Activated CD4-positive, alpha-beta memory T cell treated with anti-CD3 and anti-CD28 coated beads for 36 hours (primary cell): ENCODE measurements at regions of chr16 and their contacts with region 1.

Region 1: DNA sequence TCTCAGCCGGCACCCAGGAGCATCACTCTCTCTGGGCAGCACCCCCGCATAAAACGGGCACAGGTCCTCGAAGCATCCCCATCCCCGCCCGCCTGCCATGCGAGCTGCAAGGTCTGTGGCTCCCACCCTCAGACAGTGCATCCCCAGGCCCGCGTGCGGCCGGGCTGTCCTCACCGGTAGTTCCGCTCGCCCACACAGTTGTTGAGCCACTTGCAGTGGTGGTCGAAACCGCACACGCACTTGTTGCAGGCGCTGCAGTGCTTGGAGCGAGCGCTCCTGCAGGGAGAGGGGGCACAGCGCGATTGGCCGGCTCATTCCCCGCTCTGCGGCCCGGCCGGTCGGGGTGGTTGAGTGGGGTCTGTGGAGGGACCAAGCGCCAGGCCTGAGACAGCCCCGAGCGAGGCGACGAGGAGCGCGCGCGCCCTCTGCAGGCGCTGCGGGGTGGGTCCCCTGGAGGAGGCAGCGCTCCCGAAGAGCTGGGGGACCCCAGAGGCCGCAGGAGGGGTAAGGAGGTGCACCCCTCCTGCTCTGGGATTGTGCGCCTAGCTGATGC is 6.0 kb upstream of the TPPP3 start:
- DNase-seq: peak; percentile 65
- H3K4me3 Mint-ChIP-seq: no peak overlapping the region
- H3K27ac Mint-ChIP-seq: no peak overlapping the region
- H3K4me1 Mint-ChIP-seq: peaks cover 1% of the 10 kb centered on the region
- H3K27me3 Mint-ChIP-seq: peaks cover 14% of the 10 kb centered on the region

Region 2: DNA sequence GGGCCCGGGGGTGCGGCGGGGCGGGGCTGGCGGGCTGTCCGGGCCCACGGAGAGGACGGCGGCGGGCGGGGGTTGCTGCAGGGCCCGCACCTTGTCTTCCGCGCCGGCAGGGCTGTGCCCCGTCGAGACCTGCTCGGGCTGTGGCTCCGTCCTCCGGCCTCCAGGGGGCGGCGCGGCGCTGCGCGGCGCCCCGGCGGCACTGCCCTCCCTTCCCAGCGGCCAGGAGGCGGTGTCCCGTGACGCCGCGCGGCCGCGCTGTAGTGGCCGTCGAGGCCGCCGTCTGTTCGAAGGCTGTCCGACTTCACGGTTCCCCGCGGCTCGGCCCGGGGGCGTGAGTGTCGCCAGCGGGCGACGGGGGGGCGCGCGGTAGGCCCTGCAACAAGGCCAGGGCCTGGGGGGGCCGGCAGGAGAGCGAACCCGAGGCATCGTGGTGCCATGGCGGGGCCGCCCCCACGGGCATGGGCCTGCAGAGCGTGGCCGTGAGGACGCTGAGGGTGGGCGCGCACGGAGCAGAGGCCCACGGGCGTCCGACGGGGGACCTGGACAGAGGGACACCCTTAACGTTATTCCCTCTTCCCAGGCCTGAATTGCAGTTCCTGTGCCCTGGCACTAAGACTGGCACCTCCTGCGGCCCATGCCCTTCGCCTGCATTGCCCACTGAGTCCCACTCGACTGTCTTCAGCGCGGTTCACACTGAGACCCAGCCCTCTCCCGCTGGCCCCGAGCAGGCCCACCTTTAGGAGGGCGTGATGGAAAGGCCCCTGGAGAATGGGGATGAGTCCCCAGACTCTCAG is 119.8 kb before region 1 on chr16 and contains the start of gene PLEKHG4:
- CTCF ChIA-PET with region 1: interaction called, 15 read pairs
- POLR2A ChIA-PET with region 1: no interaction called
- intact Hi-C with region 1: loop called (anchors 2 kb)
- DNase-seq: peak; percentile 90
- H3K4me3 Mint-ChIP-seq: peak within 1 kb of the TSS; percentile 86
- H3K27ac Mint-ChIP-seq: peak within 1 kb of the TSS; percentile 88
- H3K4me1 Mint-ChIP-seq: peaks cover 20% of the 10 kb centered on the region
- H3K27me3 Mint-ChIP-seq: no peaks in the 10 kb centered on the region
- total RNA-seq, gene PLEKHG4: 22.7 to 24.6 TPM

Region 3: DNA sequence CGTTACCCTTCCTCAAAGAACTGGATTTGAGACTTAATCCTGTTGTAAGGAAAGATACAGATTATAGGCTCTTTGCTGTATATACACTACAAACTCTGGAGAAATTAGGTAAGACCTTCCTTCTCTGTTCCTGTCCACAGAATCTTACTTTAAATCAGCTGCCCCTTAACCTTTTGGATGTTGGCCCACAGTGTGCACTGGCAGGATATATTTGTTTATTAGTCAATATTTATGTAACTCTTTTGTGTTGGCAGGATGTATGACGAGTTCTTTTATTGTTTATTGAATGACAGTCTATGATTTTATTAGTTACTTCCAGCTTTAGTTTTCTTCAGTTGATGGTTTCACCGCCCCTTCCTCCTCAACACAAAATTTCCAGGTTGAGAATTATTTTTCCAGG is 52.9 kb before region 1 on chr16:
- CTCF ChIA-PET with region 1: interaction called, 11 read pairs
- POLR2A ChIA-PET with region 1: no interaction called
- intact Hi-C with region 1: no loop called
- DNase-seq: no peak
- H3K4me3 Mint-ChIP-seq: no peak overlapping the region
- H3K27ac Mint-ChIP-seq: no peak overlapping the region
- H3K4me1 Mint-ChIP-seq: no peaks in the 10 kb centered on the region
- H3K27me3 Mint-ChIP-seq: peaks cover 4% of the 10 kb centered on the region

Region 4: GRCh38 chr16:67372664-67373063 is 26.6 kb before region 1 on chr16:
- CTCF ChIA-PET with region 1: interaction called, 3 read pairs
- POLR2A ChIA-PET with region 1: no interaction called
- intact Hi-C with region 1: loop called (anchors 2 kb)
- DNase-seq: no peak
- H3K4me3 Mint-ChIP-seq: no peak overlapping the region
- H3K27ac Mint-ChIP-seq: no peak overlapping the region
- H3K4me1 Mint-ChIP-seq: no peaks in the 10 kb centered on the region
- H3K27me3 Mint-ChIP-seq: peaks cover 8% of the 10 kb centered on the region

Region 5: GRCh38 chr16:67437513-67437912 is 38.3 kb after region 1 on chr16:
- CTCF ChIA-PET with region 1: no interaction called
- POLR2A ChIA-PET with region 1: no interaction called
- intact Hi-C with region 1: no loop called
- DNase-seq: peak; percentile 37
- H3K4me3 Mint-ChIP-seq: no peak overlapping the region
- H3K27ac Mint-ChIP-seq: no peak overlapping the region
- H3K4me1 Mint-ChIP-seq: peaks cover 4% of the 10 kb centered on the region
- H3K27me3 Mint-ChIP-seq: no peaks in the 10 kb centered on the region